ENCODE measurements at regions of chr21 and their contacts with region 1.

Region 1: DNA sequence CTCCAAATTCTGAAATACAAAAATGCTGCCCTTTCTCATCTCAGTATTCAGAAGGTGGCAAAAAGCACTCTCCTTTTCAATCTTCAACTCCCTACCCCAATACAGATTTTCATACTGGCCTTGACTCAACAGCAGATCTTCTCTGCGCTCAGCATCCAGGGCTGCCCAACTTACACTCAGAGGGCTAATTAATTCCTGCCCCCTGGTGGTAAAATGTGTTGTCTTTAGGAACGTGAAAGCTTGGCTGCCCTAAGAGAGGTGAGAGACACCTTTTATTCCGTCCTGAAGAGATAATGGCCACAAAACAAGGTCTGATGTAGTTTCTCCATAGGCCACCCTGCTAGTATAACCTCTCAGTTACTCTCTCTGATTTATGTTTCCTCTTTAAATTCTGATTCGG is 25.0 kb downstream of the KRTAP24-1 start:
- DNase-seq: no peak
- ATAC-seq: no peak

Region 2: DNA sequence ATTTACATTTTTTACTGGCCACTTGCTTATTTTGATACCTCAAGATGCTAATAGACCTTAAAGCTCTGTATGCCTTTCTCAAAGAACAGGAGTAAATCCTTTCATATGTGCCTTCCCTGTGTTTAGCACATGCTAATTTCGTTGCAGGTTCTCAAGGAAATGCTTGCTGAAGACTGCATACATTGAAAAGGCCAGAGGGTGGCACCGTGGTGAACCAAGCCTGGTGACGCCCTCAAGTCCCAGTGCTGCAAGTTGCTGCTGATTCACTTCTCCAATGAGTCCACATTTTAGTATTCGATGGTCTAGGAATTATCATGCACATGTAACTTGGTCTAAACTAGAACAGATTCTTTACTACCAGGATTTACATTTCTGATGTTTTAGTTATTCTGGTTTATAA is 185.3 kb before region 1 on chr21:
- intact Hi-C with region 1: loop called (anchors 10 kb)
- DNase-seq: no peak
- ATAC-seq: no peak

Region 3: DNA sequence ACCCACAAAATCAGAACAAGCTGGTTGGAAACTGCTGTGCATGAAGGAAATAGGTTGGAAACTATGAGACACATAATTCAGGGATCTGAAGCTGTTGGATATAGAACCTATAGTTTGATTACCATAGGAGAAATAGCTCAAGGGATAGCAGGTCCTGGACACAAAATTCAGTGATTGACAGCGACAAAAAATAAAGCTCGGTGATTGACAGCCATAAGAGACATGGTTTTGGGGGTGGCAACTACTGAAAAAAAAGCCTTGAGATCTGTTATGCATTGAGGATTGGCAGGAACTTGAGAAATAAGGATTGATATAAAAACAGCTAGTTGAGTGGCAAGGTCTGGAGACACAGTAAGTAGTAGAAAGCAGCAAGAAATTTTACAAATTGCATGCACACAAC is 31.4 kb after region 1 on chr21 and contains the start of gene KRTAP25-1:
- intact Hi-C with region 1: no loop called
- DNase-seq: no peak
- ATAC-seq: no peak
- total RNA-seq, gene KRTAP25-1: not detected

Region 4: GRCh38 chr21:30336596-30336995 is 78.8 kb after region 1 on chr21:
- intact Hi-C with region 1: no loop called
- DNase-seq: no peak
- ATAC-seq: no peak